Transverse colon (tissue), 4 donors: ENCODE measurements at regions of chr9 and their contacts with region 1.

Region 1: DNA sequence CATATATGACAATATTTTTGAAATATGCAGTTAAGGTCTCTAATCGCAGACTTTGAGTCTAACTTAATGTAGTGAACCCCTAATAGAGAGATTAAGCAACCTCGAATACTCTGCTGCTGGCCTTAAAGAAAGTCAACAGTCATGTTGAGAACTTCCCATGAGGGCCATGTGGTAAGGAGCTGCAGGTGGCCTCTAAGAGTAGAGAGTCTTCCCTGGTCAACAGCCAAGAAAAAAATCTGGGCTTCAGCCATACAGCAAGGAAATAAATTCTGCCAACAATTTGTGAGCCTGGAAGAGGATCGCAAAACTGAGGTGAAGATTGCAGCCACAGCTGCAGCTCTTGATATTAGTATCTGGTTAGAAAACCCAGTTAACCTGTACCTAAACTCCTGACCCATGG is 935.2 kb upstream of the TYRP1 start:
- DNase-seq: no peak
- H3K4me3 ChIP-seq: no peak overlapping the region
- H3K27ac ChIP-seq: no peak overlapping the region
- H3K4me1 ChIP-seq: no peaks in the 10 kb centered on the region
- H3K27me3 ChIP-seq: no peaks in the 10 kb centered on the region
- CTCF ChIP-seq: no peak
- EP300 ChIP-seq: no peak
- POLR2A ChIP-seq: no peak

Region 2: DNA sequence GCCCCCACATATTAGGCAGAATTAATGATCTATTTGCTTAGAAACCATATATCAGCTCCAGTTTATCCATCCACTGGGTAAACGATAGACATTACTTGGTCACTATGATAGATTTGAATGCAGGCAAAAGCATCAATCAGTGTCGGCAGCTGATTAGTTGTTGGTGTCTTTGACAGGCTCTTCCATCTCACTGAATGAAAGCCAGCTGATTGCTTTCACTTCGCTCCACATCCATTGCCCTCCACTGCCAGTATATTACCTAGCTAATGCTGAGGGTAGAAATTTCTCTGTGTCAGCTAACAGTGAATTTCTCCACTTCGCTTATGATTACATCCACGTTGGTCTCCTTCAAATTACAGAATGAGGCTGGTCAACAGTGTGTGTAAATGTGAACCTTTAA is 113.8 kb after region 1 on chr9:
- in situ Hi-C with region 1: loop called in 1 of 4 experiments (anchors 25 kb)
- intact Hi-C with region 1: no loop called
- DNase-seq: no peak
- H3K4me3 ChIP-seq: no peak overlapping the region
- H3K27ac ChIP-seq: no peak overlapping the region
- H3K4me1 ChIP-seq: no peaks in the 10 kb centered on the region
- H3K27me3 ChIP-seq: no peaks in the 10 kb centered on the region
- CTCF ChIP-seq: no peak
- EP300 ChIP-seq: no peak
- POLR2A ChIP-seq: no peak